WTC11 (cell line): ENCODE measurements at regions of chr15 and their contacts with region 1.

Region 1: GRCh38 chr15:25783607-25784540 is 79.3 kb downstream of the ATP10A start:
- DNase-seq: peak; percentile 86
- ATAC-seq: peak; percentile 80
- H3K4me3 Mint-ChIP-seq: no peak overlapping the region
- H3K27ac Mint-ChIP-seq: no peak overlapping the region
- H3K4me1 Mint-ChIP-seq: peaks cover 20% of the 10 kb centered on the region
- H3K27me3 Mint-ChIP-seq: no peaks in the 10 kb centered on the region
- CTCF ChIP-seq: peak; percentile 69

Region 2: GRCh38 chr15:25508369-25509002 is 275.4 kb before region 1 on chr15:
- CTCF ChIA-PET with region 1: interaction called, 14 read pairs
- POLR2A ChIA-PET with region 1: no interaction called
- DNase-seq: no peak
- ATAC-seq: peak; percentile 36; the same call in 1 of the 2 replicates
- H3K4me3 Mint-ChIP-seq: no peak overlapping the region
- H3K27ac Mint-ChIP-seq: no peak overlapping the region
- H3K4me1 Mint-ChIP-seq: peaks cover 51% of the 10 kb centered on the region
- H3K27me3 Mint-ChIP-seq: no peaks in the 10 kb centered on the region; the same call in 1 of the 2 replicates
- CTCF ChIP-seq: peak; percentile 36; the same call in 1 of the 2 replicates

Region 3: GRCh38 chr15:25543196-25543595 is 240.7 kb before region 1 on chr15:
- CTCF ChIA-PET with region 1: no interaction called
- POLR2A ChIA-PET with region 1: no interaction called
- DNase-seq: no peak
- ATAC-seq: no peak
- H3K4me3 Mint-ChIP-seq: no peak overlapping the region
- H3K27ac Mint-ChIP-seq: no peak overlapping the region
- H3K4me1 Mint-ChIP-seq: peaks cover 26% of the 10 kb centered on the region
- H3K27me3 Mint-ChIP-seq: no peaks in the 10 kb centered on the region
- CTCF ChIP-seq: no peak

Region 4: DNA sequence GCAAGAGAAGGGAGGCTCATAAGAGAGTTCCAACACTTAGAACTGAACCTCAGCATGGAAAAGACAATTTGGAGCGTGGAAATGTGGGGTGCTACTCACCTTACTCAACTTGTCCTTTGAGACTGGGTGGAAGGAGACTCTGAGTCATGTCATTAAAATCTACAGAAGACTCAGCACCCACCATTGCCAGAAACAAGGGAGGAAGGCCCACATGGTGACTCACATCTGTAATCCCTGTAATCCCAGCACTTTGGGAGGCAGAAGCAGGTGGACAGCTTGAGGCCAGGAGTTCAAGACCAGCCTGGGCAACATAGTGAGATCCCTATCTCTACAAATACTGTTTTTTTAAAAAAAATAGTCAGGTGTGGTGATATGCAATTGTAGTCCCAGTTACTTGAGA is 183.1 kb before region 1 on chr15:
- CTCF ChIA-PET with region 1: no interaction called
- POLR2A ChIA-PET with region 1: no interaction called
- DNase-seq: no peak
- ATAC-seq: no peak
- H3K4me3 Mint-ChIP-seq: no peak overlapping the region
- H3K27ac Mint-ChIP-seq: no peak overlapping the region
- H3K4me1 Mint-ChIP-seq: 0 out of 2 replicates have a peak, but pooled peaks cover 2% of the 10 kb centered on the region
- H3K27me3 Mint-ChIP-seq: no peaks in the 10 kb centered on the region; the same call in 1 of the 2 replicates
- CTCF ChIP-seq: no peak

Region 5: DNA sequence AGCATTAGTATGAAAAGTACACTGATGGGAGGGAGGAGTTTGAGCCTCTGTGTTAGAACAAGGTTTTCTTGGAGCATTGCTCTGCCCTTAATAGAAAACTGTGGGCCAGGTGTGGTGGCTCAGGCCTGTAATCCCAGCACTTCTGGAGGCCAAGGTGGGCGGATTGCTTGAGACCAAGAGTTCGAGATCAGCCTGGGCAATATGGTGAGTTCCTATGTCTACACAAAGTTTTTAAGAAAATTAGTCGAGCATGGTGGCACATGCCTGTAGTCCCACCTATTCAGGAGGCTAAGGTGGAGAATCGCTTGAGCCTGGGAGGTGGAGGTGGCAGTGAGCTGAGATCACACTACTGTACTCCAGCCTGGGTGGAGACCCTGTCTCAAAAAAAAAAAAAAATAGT is 24.5 kb before region 1 on chr15:
- CTCF ChIA-PET with region 1: interaction called, 11 read pairs
- POLR2A ChIA-PET with region 1: no interaction called
- DNase-seq: no peak
- ATAC-seq: no peak
- H3K4me3 Mint-ChIP-seq: no peak overlapping the region
- H3K27ac Mint-ChIP-seq: no peak overlapping the region
- H3K4me1 Mint-ChIP-seq: peaks cover 7% of the 10 kb centered on the region
- H3K27me3 Mint-ChIP-seq: no peaks in the 10 kb centered on the region
- CTCF ChIP-seq: no peak

Region 6: DNA sequence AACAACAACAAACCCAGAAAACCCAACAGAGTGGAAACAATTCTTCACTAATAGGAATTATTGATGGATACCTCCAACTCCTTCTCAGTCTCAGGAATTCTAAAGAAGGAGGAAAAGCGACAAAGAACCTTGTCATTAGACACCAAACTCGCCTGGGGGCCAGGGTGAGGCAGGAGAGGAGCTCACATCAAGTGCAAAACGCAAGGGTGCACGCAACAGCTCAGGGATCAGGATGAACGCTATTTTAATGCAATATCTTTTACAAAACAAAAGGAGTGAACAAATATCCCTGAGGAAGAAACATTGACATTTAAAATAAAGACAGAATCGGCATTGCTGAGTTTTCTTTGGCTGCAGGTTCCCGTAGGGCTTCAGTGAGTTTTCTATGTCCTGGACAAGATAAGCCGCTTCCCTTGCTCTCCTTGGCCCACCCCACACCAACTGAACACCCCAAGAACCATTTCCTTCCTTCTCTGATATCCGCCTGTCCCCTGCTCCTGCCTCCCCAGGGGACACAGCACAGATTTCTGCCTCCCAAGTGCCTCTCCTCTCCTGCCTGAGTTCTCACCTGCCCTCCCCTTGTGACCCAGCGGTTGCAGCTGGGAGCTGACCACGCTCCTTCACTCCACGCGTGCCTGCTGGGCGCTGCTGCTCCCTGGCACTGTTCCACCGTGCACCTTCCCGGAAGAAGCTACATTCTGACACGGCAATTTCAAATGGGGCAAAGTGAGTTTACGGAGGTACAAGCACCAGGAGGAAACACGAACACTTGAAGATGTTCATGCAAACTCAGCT is 16.2 kb after region 1 on chr15:
- CTCF ChIA-PET with region 1: interaction called, 12 read pairs
- POLR2A ChIA-PET with region 1: no interaction called
- DNase-seq: no peak
- ATAC-seq: peak; percentile 22; the same call in 1 of the 2 replicates
- H3K4me3 Mint-ChIP-seq: no peak overlapping the region
- H3K27ac Mint-ChIP-seq: peak overlapping the region; percentile 66
- H3K4me1 Mint-ChIP-seq: peaks cover 30% of the 10 kb centered on the region
- H3K27me3 Mint-ChIP-seq: no peaks in the 10 kb centered on the region; the same call in 1 of the 2 replicates
- CTCF ChIP-seq: no peak

Region 7: GRCh38 chr15:25862472-25863110 is 78.7 kb after region 1 on chr15:
- CTCF ChIA-PET with region 1: interaction called, 13 read pairs
- POLR2A ChIA-PET with region 1: no interaction called
- DNase-seq: peak; percentile 47
- ATAC-seq: peak; percentile 55
- H3K4me3 Mint-ChIP-seq: peak overlapping the region; percentile 77
- H3K27ac Mint-ChIP-seq: no peak overlapping the region
- H3K4me1 Mint-ChIP-seq: peaks cover 17% of the 10 kb centered on the region
- H3K27me3 Mint-ChIP-seq: peaks cover 62% of the 10 kb centered on the region
- CTCF ChIP-seq: no peak

Region 8: DNA sequence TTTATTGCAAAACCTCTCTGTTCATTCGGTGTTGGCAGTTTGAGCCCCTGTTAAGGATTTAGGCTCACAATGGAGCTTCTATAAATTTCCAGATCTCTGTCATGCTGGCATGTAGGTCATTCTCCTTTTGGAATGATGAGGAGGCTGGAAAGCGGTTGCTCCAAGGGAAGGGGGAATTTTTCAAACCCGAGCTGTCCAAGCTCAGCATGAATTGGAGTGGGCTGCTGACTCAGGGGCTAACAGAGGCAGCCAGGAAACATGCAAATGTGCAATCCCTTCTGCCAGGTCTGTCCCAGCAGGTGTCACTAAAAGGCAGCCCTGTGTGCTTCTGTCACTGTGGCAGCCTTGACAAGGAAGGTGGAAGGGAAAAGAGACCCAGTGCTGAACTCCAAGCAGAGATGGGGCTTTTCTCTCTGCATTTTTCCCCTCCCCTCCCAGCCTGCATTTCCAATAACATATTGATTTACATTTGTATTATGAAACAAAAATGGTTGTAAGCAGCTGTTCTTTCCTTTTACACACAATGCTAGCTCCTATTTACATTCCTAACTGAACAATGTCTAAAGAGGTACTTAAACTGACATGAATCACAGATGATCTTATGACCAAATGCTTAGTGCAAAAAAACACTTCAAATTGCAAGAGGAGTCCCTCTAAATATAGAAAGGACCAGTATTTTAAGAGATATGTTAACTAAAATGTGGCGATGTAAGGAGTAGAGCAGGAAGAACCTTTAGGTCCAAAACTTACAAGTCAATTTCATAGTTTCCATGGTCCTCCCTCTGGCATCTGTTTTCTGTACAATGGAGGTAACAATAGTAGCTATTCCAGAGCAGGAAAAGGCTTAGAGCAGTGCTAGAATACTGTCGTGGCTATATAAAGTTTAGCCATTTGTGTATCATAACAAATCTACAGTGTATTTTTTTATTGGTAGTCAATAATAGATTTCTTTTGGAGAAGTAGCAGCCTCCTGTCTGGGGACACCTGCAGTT is 163.7 kb after region 1 on chr15:
- CTCF ChIA-PET with region 1: interaction called, 14 read pairs
- POLR2A ChIA-PET with region 1: interaction called, 7 read pairs
- DNase-seq: peak; percentile 51
- ATAC-seq: no peak
- H3K4me3 Mint-ChIP-seq: peak overlapping the region; percentile 25; the same call in 1 of the 2 replicates
- H3K27ac Mint-ChIP-seq: peak overlapping the region; percentile 60; the same call in 1 of the 2 replicates
- H3K4me1 Mint-ChIP-seq: peaks cover 15% of the 10 kb centered on the region
- H3K27me3 Mint-ChIP-seq: no peaks in the 10 kb centered on the region
- CTCF ChIP-seq: no peak